Endothelial cell of umbilical vein (primary cell): ENCODE measurements at regions of chr12 and their contacts with region 1.

Region 1: GRCh38 chr12:59716043-59716442 is 120.2 kb downstream of the SLC16A7 start:
- DNase-seq: peak; percentile 2
- H3K4me3 ChIP-seq: no peak overlapping the region
- H3K27ac ChIP-seq: no peak overlapping the region
- H3K4me1 ChIP-seq: no peaks in the 10 kb centered on the region
- H3K27me3 ChIP-seq: no peaks in the 10 kb centered on the region
- CTCF ChIP-seq: no peak
- POLR2A ChIP-seq: no peak

Region 2: DNA sequence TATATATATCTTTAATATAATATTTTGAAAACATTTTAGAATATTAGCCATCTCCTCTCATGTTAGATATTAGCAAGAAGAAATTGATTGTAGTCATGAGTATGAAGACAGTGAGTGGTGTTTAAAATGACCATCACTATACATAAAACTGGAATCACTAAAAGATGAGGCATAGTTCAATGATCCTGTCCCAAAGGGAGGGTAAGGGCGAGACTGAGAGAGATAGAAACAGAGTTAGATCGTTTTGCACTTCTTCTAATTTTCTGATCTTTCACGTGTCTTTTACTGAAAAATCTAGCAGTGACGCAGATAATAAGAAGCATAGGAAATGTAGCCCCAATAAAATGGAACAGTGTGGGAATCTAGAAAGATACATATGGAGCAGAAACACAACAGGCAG is 507.2 kb after region 1 on chr12:
- CTCF ChIA-PET with region 1: no interaction called
- POLR2A ChIA-PET with region 1: no interaction called
- dilution Hi-C with region 1: no loop called
- intact Hi-C with region 1: loop called (anchors 5 kb)
- DNase-seq: no peak
- H3K4me3 ChIP-seq: no peak overlapping the region
- H3K27ac ChIP-seq: no peak overlapping the region
- H3K4me1 ChIP-seq: no peaks in the 10 kb centered on the region
- H3K27me3 ChIP-seq: no peaks in the 10 kb centered on the region
- CTCF ChIP-seq: no peak
- POLR2A ChIP-seq: no peak